ENCODE measurements at regions of chr2 and their contacts with region 1.

Region 1: DNA sequence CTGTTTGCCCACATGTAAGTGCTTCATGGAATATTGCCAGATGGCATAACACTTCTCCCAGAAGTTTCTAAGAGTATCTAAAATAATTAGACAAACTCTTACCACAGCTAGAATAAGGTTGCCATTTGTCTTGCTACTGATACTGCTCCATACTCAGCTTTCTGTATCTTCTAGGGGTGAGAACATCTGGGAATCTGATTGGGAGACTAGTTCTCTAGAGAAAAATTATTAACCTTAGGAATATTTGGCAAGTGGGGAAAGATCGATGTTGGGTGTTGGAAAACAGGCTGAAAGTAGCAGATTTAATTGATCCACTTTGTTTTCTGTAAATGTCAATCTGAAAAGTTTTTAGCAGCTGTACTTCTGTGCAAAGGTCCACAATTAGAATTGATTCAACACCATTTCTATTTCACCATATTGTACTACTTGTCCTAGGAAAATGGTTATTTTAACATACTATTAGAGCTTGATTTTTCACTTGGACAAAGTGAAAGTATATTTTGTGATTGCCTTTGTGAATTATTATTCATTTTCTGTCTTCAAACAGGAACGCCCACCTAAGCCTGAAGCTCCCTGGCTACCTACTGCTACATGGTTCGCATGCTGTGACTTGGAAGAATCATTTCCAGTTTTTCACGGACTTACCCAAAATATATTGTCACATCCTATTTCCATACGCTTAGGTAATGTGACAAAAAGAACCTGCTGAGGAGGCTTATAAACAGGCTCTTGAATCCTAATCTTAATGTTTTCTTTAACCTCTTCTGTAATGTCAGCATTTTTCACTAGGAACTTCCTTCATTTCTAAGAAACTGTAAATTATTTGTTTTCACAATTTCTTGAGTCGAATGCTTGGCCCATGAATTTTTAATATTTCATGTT is 147.7 kb downstream of the TRABD2A start:
- DNase-seq: no peak
- ATAC-seq: no peak
- H3K4me3 ChIP-seq: no peak overlapping the region
- H3K4me3 Mint-ChIP-seq: no peak overlapping the region
- H3K27ac ChIP-seq: no peak overlapping the region
- H3K27ac Mint-ChIP-seq: peak overlapping the region; percentile 47
- H3K4me1 ChIP-seq: peaks cover 15% of the 10 kb centered on the region
- H3K4me1 Mint-ChIP-seq: peaks cover 37% of the 10 kb centered on the region
- H3K27me3 ChIP-seq: no peaks in the 10 kb centered on the region
- H3K27me3 Mint-ChIP-seq: no peaks in the 10 kb centered on the region
- CTCF ChIP-seq: no peak

Region 2: DNA sequence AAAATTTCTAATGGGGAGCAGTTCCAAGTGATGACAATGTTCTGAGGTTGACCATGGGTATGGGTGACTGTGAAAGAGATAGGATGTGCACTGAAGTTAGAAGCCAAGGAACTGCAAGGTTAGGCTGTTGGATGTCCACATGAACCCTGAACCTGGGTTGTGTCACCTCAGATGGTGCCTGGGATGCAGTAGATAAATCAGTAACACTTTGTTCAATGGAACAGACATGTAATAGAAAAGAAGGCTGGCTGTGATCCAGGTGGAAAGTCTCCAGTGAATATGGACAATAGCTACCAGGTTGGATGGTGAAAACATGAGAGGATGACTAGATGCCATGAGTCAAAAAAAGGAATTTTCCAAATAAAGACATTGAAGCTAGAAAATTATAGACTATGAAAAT is 16.3 kb after region 1 on chr2:
- CTCF ChIA-PET with region 1: no interaction called
- POLR2A ChIA-PET with region 1: no interaction called
- intact Hi-C with region 1: loop called in 1 of 2 experiments (anchors 2 kb)
- DNase-seq: no peak
- ATAC-seq: no peak
- H3K4me3 ChIP-seq: no peak overlapping the region
- H3K4me3 Mint-ChIP-seq: no peak overlapping the region
- H3K27ac ChIP-seq: no peak overlapping the region
- H3K27ac Mint-ChIP-seq: no peak overlapping the region
- H3K4me1 ChIP-seq: no peaks in the 10 kb centered on the region
- H3K4me1 Mint-ChIP-seq: peaks cover 8% of the 10 kb centered on the region
- H3K27me3 ChIP-seq: no peaks in the 10 kb centered on the region
- H3K27me3 Mint-ChIP-seq: no peaks in the 10 kb centered on the region
- CTCF ChIP-seq: no peak